Endothelial cell of umbilical vein (primary cell): ENCODE measurements at regions of chr12 and their contacts with region 1.

Region 1: GRCh38 chr12:6116175-6117021 is 8.1 kb downstream of the VWF start:
- DNase-seq: peak; percentile 95
- H3K4me3 ChIP-seq: peak overlapping the region in 1 of 3 experiments; percentile 0
- H3K27ac ChIP-seq: peak overlapping the region; percentile 100
- H3K4me1 ChIP-seq: peaks cover 91% of the 10 kb centered on the region
- H3K27me3 ChIP-seq: no peaks in the 10 kb centered on the region
- CTCF ChIP-seq: no peak
- POLR2A ChIP-seq: peak; percentile 77

Region 2: DNA sequence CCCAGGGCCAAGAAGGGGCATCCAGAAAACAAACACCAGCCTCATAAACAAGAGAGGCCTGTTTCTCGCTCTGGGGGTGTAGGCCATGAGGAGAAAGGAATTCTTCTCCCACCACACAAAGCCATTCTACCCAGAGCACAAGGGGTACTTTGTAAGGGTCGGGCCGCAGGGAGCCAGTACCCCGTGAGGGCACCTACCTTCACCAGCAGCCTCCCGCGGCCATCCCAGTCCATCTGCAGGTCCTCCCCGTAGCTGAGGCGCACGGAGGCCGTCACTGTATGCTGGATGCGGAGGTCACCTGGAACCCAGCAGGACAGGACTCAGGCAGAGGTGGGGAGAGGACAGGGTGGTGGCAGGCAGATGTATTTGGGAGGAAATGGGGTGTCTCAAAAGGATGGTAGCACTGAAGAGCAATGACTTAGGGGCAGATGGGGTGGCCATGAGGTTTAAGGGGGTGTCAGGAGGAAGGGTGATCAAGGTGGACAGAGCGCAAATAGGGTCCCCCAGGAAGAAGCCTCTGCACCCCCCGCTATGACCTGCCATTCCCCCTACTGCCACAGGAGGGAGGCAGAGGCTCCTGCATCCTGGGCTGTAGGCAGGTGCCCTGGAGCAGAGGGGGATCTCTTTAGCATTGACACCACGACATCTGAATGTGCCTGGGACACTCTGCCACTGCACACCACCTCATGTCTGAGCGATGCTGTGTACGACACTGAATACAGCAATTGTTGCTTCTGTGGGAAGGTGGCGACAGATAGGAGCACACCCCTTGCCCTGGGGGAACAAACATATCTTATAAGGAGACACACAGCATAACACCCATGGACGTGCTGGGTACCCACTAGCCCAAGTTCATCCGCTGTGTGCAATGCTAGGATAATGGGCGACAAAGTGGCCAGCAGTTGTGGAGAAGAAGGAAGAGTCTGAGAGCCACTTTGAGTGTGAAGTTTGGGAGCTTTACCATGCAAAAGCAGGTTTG is 53.4 kb before region 1 on chr12:
- CTCF ChIA-PET with region 1: interaction called, 6 read pairs
- POLR2A ChIA-PET with region 1: interaction called, 6 read pairs
- dilution Hi-C with region 1: no loop called
- intact Hi-C with region 1: loop called (anchors 1 kb)
- DNase-seq: no peak
- H3K4me3 ChIP-seq: no peak overlapping the region
- H3K27ac ChIP-seq: no peak overlapping the region
- H3K4me1 ChIP-seq: peaks cover 14% of the 10 kb centered on the region
- H3K27me3 ChIP-seq: no peaks in the 10 kb centered on the region
- CTCF ChIP-seq: peak; percentile 61 to 83
- POLR2A ChIP-seq: peak; percentile 42

Region 3: GRCh38 chr12:6092784-6093722 is 23.3 kb before region 1 on chr12:
- CTCF ChIA-PET with region 1: interaction called, 6 read pairs
- POLR2A ChIA-PET with region 1: interaction called, 4 read pairs
- dilution Hi-C with region 1: no loop called
- intact Hi-C with region 1: loop called (anchors 1 kb)
- DNase-seq: peak; percentile 92
- H3K4me3 ChIP-seq: no peak overlapping the region
- H3K27ac ChIP-seq: peak overlapping the region; percentile 60
- H3K4me1 ChIP-seq: peaks cover 87% of the 10 kb centered on the region
- H3K27me3 ChIP-seq: no peaks in the 10 kb centered on the region
- CTCF ChIP-seq: peak in 1 of 2 donors; percentile 14
- POLR2A ChIP-seq: no peak

Region 4: GRCh38 chr12:6140651-6141447 is 24.5 kb after region 1 on chr12:
- CTCF ChIA-PET with region 1: interaction called, 5 read pairs
- POLR2A ChIA-PET with region 1: interaction called, 5 read pairs
- dilution Hi-C with region 1: no loop called
- intact Hi-C with region 1: loop called (anchors 1 kb)
- DNase-seq: peak; percentile 85
- H3K4me3 ChIP-seq: no peak overlapping the region
- H3K27ac ChIP-seq: peak overlapping the region; percentile 86
- H3K4me1 ChIP-seq: peaks cover 42% of the 10 kb centered on the region
- H3K27me3 ChIP-seq: no peaks in the 10 kb centered on the region
- CTCF ChIP-seq: no peak
- POLR2A ChIP-seq: peak; percentile 25

Region 5: GRCh38 chr12:6182116-6182898 is 65.9 kb after region 1 on chr12:
- CTCF ChIA-PET with region 1: interaction called, 4 read pairs
- POLR2A ChIA-PET with region 1: interaction called, 3 read pairs
- dilution Hi-C with region 1: no loop called
- intact Hi-C with region 1: loop called (anchors 1 kb)
- DNase-seq: peak; percentile 89
- H3K4me3 ChIP-seq: no peak overlapping the region
- H3K27ac ChIP-seq: peak overlapping the region; percentile 96
- H3K4me1 ChIP-seq: peaks cover 53% of the 10 kb centered on the region
- H3K27me3 ChIP-seq: no peaks in the 10 kb centered on the region
- CTCF ChIP-seq: no peak
- POLR2A ChIP-seq: peak; percentile 52

Region 6: GRCh38 chr12:6323340-6323994 is 207.1 kb after region 1 on chr12:
- CTCF ChIA-PET with region 1: no interaction called
- POLR2A ChIA-PET with region 1: no interaction called
- dilution Hi-C with region 1: no loop called
- intact Hi-C with region 1: no loop called
- DNase-seq: peak; percentile 98
- H3K4me3 ChIP-seq: no peak overlapping the region
- H3K27ac ChIP-seq: peak overlapping the region; percentile 80
- H3K4me1 ChIP-seq: peaks cover 36% of the 10 kb centered on the region
- H3K27me3 ChIP-seq: no peaks in the 10 kb centered on the region
- CTCF ChIP-seq: peak; percentile 62 to 67
- POLR2A ChIP-seq: no peak